ENCODE measurements at regions of chr4 and their contacts with region 1.

Region 1: GRCh38 chr4:153142700-153143438 is 61.4 kb upstream of the TRIM2 start:
- DNase-seq: peak; percentile 75
- H3K4me3 Mint-ChIP-seq: no peak overlapping the region
- H3K27ac Mint-ChIP-seq: no peak overlapping the region
- H3K4me1 Mint-ChIP-seq: no peaks in the 10 kb centered on the region
- H3K27me3 Mint-ChIP-seq: peaks cover 27% of the 10 kb centered on the region

Region 2: DNA sequence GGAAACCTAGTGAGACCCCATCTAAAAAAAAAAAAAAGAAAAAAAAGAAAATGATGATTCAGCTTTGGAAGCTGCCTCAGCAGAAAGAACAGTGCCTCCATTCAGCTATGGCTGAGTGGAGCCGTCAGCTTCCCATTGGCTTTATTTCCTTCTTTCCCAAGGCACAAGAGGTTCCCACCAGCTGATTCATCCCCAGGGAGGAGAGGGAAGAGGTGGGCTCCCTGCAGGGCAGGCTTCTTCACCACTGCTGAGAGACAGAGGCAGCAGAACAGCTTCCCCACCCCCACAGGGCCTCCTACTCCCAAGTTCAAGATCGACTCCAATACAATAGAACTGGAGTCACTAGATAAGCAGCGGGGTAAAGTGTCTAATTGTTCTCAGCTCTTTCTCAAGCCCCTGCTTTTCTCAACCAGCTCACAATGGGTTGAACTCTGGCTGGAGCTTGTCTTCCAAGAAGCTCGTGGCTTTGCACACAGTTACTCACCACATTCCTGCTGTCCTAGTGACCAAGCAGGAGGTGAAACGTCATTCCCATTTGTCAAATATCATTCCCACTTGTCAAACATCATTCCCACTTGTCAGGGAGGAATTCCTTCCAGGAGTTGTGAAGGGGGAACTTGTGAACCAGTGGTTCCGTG is 159.0 kb before region 1 on chr4:
- CTCF ChIA-PET with region 1: no interaction called
- DNase-seq: no peak
- H3K4me3 Mint-ChIP-seq: no peak overlapping the region
- H3K27ac Mint-ChIP-seq: no peak overlapping the region
- H3K4me1 Mint-ChIP-seq: no peaks in the 10 kb centered on the region
- H3K27me3 Mint-ChIP-seq: peaks cover 31% of the 10 kb centered on the region

Region 3: GRCh38 chr4:153156263-153156662 is 13.4 kb after region 1 on chr4:
- CTCF ChIA-PET with region 1: interaction called, 20 read pairs
- DNase-seq: peak; percentile 50
- H3K4me3 Mint-ChIP-seq: no peak overlapping the region
- H3K27ac Mint-ChIP-seq: no peak overlapping the region
- H3K4me1 Mint-ChIP-seq: peaks cover 50% of the 10 kb centered on the region
- H3K27me3 Mint-ChIP-seq: peaks cover 50% of the 10 kb centered on the region

Region 4: GRCh38 chr4:153318696-153319320 is 175.9 kb after region 1 on chr4:
- CTCF ChIA-PET with region 1: interaction called, 14 read pairs
- DNase-seq: peak; percentile 41
- H3K4me3 Mint-ChIP-seq: no peak overlapping the region
- H3K27ac Mint-ChIP-seq: no peak overlapping the region
- H3K4me1 Mint-ChIP-seq: no peaks in the 10 kb centered on the region
- H3K27me3 Mint-ChIP-seq: peaks cover 3% of the 10 kb centered on the region

Region 5: DNA sequence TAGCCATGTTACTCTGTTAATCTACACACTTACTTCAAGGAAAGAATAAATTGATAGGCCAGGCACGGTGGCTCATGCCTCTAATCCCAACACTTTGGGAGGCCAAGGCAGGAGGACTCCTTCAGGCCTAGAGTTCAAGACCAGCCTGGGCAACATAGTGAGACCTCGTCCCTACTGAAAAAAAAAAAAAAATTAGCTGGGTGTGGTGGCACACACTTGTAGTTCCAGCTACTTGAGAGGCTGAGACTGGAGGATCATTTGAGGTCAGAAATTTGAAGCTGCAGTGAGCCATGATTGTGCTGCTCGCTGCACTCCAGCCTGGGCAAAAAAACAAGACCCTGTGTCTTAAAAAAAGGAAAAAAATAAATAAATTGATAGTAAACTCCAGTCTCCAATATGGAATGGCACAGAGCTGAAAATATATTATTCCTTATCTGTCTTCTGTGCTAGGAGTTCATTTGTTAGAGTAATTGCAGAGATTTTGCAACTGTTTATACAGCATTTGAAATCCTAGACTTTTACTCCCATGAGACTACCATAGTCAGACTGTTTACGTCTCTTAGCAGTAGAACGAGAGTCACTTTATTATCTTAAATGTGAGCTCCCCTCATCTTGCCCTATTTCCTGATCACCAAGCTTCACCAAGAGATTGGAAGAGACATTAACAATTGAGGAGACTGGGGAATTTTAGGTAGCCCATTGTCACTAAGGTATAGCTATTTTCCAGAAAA is 304.5 kb after region 1 on chr4:
- CTCF ChIA-PET with region 1: no interaction called
- DNase-seq: no peak
- H3K4me3 Mint-ChIP-seq: no peak overlapping the region
- H3K27ac Mint-ChIP-seq: no peak overlapping the region
- H3K4me1 Mint-ChIP-seq: peaks cover 30% of the 10 kb centered on the region
- H3K27me3 Mint-ChIP-seq: no peaks in the 10 kb centered on the region

Region 6: DNA sequence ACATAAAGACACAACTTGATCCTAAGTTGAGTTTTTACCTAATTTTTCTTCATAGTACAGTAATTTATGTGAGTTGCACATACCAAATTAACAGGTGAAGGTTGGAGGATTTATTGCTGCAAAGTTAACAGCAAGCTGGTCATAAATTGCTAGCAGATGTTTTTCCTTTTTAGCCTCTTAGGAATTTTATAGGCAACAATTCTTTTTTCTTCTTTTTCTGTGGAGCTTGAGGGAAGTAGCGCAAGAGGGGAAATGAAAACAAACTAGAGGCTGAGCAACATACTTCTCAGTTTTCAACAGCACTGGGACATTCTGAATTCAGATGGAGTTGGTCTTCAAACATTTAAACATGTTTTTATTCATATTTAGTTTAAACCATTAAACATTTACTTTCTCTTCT is 477.5 kb after region 1 on chr4:
- CTCF ChIA-PET with region 1: no interaction called
- DNase-seq: no peak
- H3K4me3 Mint-ChIP-seq: no peak overlapping the region
- H3K27ac Mint-ChIP-seq: no peak overlapping the region
- H3K4me1 Mint-ChIP-seq: peaks cover 19% of the 10 kb centered on the region
- H3K27me3 Mint-ChIP-seq: no peaks in the 10 kb centered on the region

Region 7: GRCh38 chr4:153643406-153644383 is 500.8 kb after region 1 on chr4:
- CTCF ChIA-PET with region 1: interaction called, 10 read pairs
- DNase-seq: no peak
- H3K4me3 Mint-ChIP-seq: no peak overlapping the region
- H3K27ac Mint-ChIP-seq: no peak overlapping the region
- H3K4me1 Mint-ChIP-seq: peaks cover 19% of the 10 kb centered on the region
- H3K27me3 Mint-ChIP-seq: no peaks in the 10 kb centered on the region